Endothelial cell of umbilical vein (primary cell): ENCODE measurements at regions of chrX and their contacts with region 1.

Region 1: DNA sequence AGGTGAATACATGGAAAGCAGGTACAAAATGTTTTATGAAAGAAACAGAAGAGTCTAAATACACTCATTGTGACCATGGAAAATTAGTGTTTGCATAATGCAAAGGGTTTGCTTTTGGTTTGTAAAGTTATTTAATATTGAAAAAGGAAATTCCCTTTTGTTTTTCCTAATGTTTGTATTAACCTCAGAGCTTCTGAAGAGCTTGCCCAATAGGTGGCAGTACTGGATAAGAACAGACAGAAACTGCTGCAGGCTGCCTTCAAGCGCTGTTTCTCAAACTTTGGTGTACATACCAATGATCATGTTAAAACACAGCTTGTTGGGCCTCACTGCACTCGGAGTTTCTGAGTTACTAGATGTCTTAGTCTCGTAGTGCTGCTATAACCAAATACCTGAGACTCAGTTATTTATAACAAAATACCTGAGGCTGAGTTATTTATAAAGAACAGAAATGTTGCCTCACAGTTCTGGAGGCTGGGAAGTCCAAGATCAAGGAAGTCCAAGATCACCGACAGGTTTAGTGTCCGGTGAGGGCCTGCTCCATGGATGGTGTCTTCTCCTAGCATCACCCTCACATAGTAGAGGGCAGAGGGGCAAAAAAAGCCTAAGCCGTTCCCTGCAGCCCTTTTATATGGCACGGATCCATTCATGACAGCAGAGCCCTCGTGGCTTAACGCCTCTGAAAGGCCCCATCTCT is 54.2 kb downstream of the SUPT20HL2 start:
- DNase-seq: peak; percentile 32
- H3K4me3 ChIP-seq: no peak overlapping the region
- H3K27ac ChIP-seq: no peak overlapping the region
- H3K4me1 ChIP-seq: peaks cover 4% of the 10 kb centered on the region
- H3K27me3 ChIP-seq: no peaks in the 10 kb centered on the region
- CTCF ChIP-seq: peak; percentile 38 to 41
- POLR2A ChIP-seq: no peak

Region 2: GRCh38 chrX:24294620-24295019 is 34.9 kb after region 1 on chrX:
- CTCF ChIA-PET with region 1: interaction called, 26 read pairs
- POLR2A ChIA-PET with region 1: no interaction called
- dilution Hi-C with region 1: no loop called
- intact Hi-C with region 1: no loop called
- DNase-seq: peak; percentile 22
- H3K4me3 ChIP-seq: no peak overlapping the region
- H3K27ac ChIP-seq: no peak overlapping the region
- H3K4me1 ChIP-seq: peaks cover 5% of the 10 kb centered on the region
- H3K27me3 ChIP-seq: no peaks in the 10 kb centered on the region
- CTCF ChIP-seq: peak; percentile 11 to 12
- POLR2A ChIP-seq: no peak

Region 3: DNA sequence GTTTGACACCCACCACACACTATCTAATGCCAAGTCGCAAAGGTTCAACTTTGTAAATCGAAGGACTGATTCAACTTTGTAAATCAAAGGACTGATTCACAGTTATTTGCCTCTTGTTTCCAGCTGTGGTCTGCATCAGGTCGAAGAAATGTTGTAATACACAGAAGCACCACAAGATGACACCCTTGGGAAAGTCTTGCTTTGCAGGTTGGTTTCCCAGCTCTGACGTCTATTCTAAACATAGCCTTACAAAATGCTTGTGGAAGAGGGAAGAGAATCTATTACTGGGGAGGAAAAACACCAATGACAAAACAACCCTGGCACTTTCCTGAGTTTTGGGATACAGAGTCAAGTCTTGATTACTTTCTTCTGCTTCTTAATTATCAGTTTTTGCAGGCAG is 136.1 kb after region 1 on chrX:
- CTCF ChIA-PET with region 1: interaction called, 23 read pairs
- POLR2A ChIA-PET with region 1: no interaction called
- dilution Hi-C with region 1: no loop called
- intact Hi-C with region 1: loop called (anchors 1 kb)
- DNase-seq: peak; percentile 68
- H3K4me3 ChIP-seq: no peak overlapping the region
- H3K27ac ChIP-seq: no peak overlapping the region
- H3K4me1 ChIP-seq: no peaks in the 10 kb centered on the region
- H3K27me3 ChIP-seq: peaks cover 0 to 4% of the 10 kb centered on the region in 2 experiments
- CTCF ChIP-seq: peak; percentile 43 to 46
- POLR2A ChIP-seq: no peak

Region 4: GRCh38 chrX:24498975-24499374 is 239.3 kb after region 1 on chrX:
- CTCF ChIA-PET with region 1: interaction called, 36 read pairs
- POLR2A ChIA-PET with region 1: no interaction called
- dilution Hi-C with region 1: no loop called
- intact Hi-C with region 1: loop called (anchors 1 kb)
- DNase-seq: peak; percentile 21
- H3K4me3 ChIP-seq: no peak overlapping the region
- H3K27ac ChIP-seq: no peak overlapping the region
- H3K4me1 ChIP-seq: peaks cover 12% of the 10 kb centered on the region
- H3K27me3 ChIP-seq: no peaks in the 10 kb centered on the region
- CTCF ChIP-seq: no peak
- POLR2A ChIP-seq: no peak

Region 5: GRCh38 chrX:24561121-24561520 is 301.4 kb after region 1 on chrX:
- CTCF ChIA-PET with region 1: interaction called, 4 read pairs
- POLR2A ChIA-PET with region 1: no interaction called
- dilution Hi-C with region 1: no loop called
- intact Hi-C with region 1: loop called (anchors 2 kb)
- DNase-seq: peak; percentile 44
- H3K4me3 ChIP-seq: no peak overlapping the region
- H3K27ac ChIP-seq: no peak overlapping the region
- H3K4me1 ChIP-seq: no peaks in the 10 kb centered on the region
- H3K27me3 ChIP-seq: no peaks in the 10 kb centered on the region
- CTCF ChIP-seq: peak in 1 of 2 donors; percentile 24
- POLR2A ChIP-seq: no peak